Activated CD4-positive, alpha-beta T cell treated with anti-CD3 and anti-CD28 coated beads, Interleukin-2, amount 10 ng/mL, durations not matched to agents 7 days and 5 days (primary cell): ENCODE measurements at regions of chr10 and their contacts with region 1.

Region 1: GRCh38 chr10:101031128-101031795 is at the starts of genes PDZD7 and SFXN3:
- DNase-seq: peak; percentile 96
- H3K4me3 Mint-ChIP-seq: peak within 1 kb of the TSS; percentile 76
- H3K27ac Mint-ChIP-seq: peak within 1 kb of the TSS; percentile 88
- H3K4me1 Mint-ChIP-seq: peaks cover 17% of the 10 kb centered on the region
- H3K27me3 Mint-ChIP-seq: peaks cover 12% of the 10 kb centered on the region
- total RNA-seq, gene PDZD7: 0.65 to 0.74 TPM
- total RNA-seq, gene SFXN3: 39.5 to 43.5 TPM

Region 2: DNA sequence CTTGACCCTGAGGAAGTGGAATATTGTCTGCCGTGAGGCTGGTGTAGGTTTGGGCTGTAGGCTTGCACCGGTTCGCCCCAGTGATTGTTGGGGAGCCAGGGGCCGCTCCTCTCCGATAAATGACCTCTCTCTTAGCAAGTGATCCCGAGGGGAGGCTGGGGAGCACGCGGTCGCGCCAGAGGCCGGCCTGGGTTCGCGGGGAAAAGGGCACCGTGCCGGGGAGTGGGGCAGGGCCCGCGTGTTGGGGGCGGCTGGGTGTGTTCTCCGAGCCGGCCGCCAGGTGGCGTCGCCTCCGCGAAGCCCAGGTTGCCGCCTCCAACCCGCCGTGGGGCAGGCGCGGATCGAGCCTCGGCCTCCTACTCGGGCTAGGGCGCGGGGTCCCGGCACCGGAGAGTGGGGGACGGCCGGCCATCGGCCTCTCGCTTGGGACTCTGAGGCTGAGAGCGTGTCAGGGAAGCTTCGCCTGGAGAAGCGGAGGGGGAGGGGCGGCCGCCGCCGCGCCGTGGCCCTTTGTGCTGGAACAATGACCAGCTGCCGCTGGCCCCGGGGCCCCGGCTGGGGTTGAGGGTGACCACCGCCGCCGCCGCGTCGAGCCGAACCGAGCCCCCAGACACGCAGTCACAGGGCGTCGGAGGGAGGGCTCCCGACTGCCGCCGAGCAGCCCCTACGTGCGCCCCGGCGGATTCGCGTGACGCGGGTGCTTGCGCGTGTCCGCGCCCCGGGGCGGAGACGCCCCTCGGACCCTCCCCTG is 32.1 kb before region 1 on chr10:
- CTCF ChIA-PET with region 1: interaction called, 24 read pairs
- POLR2A ChIA-PET with region 1: no interaction called
- DNase-seq: peak; percentile 73
- H3K4me3 Mint-ChIP-seq: peak overlapping the region; percentile 80
- H3K27ac Mint-ChIP-seq: peak overlapping the region; percentile 88
- H3K4me1 Mint-ChIP-seq: peaks cover 27% of the 10 kb centered on the region
- H3K27me3 Mint-ChIP-seq: peaks cover 2% of the 10 kb centered on the region

Region 3: DNA sequence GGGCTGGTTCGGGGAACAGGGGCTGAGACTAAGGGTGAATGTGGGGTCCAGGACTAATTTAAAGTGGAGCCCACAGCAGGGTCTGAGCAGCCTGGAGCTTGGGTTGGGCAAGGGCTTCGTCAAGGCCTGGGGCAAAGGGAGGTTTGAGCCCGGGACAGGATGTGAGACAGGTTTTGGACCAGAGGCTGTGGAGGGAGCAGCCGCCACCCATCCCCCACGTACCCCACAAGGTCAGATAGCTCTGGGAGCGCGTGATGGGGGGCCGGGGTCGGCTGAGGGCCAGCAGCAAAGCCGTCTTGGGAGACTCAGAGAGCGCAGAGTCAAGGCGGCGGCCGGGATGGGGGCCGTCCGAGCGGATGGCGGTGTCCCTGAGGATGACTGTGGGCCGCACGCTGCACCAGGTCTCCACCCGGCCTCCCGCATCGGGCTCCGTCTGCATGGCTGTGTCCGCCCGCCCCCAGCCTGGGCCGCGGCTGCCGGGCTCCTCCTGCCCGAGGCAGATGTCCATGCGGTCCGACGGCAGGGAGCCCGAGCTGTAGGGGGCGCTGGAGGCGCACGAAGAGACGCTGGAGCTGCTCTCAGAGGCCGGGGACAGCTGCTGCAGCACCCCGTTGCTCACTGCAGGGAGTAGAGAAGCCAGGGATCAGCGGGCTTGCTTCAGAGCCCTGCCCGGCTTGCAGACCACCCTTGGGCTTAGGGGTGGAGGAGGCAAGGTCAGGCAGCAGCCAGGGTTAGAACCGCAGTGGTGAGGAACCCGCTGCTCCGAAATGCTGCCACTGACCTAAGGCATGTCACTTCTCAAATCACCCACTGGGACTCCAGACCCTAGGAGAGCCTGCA is 12.4 kb before region 1 on chr10:
- CTCF ChIA-PET with region 1: interaction called, 104 read pairs
- POLR2A ChIA-PET with region 1: no interaction called
- DNase-seq: peak; percentile 76
- H3K4me3 Mint-ChIP-seq: no peak overlapping the region
- H3K27ac Mint-ChIP-seq: no peak overlapping the region
- H3K4me1 Mint-ChIP-seq: peaks cover 11% of the 10 kb centered on the region
- H3K27me3 Mint-ChIP-seq: peaks cover 38% of the 10 kb centered on the region

Region 4: DNA sequence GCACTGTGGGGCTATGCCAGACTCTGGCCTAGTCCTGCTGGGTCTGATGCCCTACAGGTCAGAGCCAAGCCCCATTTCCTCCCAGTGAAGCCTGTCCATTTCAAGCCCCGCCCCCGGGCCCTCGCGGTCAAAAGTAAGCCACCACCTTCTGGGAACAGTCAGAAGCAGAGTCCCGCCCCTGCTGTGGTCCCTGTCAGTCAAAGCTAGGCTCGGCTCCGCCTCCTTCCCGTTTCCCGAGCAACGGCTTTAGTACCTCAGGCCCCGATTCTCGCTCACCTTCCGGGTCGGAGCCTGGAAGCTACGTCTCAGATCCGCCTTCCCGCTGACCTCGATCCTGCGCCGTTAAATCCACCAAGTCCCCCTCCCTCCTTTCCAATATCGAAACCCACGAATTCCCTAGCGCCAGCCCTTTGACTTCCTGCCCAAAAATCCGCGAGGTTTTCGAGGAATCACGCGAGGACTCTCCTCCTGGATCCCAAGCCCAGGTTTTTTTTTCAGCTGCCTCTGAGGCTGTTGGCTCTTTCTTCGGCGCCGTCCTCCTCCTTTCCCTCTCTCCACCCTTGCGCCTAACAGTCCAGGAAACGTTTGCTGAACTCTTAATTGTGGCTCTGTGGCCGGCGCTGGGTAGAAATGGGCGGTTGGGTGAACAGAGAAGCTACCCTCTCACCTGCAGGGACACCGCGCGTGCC is 11.5 kb after region 1 on chr10:
- CTCF ChIA-PET with region 1: interaction called, 38 read pairs
- POLR2A ChIA-PET with region 1: no interaction called
- DNase-seq: peak; percentile 89
- H3K4me3 Mint-ChIP-seq: peak overlapping the region; percentile 89
- H3K27ac Mint-ChIP-seq: peak overlapping the region; percentile 85
- H3K4me1 Mint-ChIP-seq: peaks cover 33% of the 10 kb centered on the region
- H3K27me3 Mint-ChIP-seq: peaks cover 38% of the 10 kb centered on the region

Region 5: GRCh38 chr10:101050208-101051069 is 19.2 kb after region 1 on chr10:
- CTCF ChIA-PET with region 1: interaction called, 15 read pairs
- POLR2A ChIA-PET with region 1: no interaction called
- DNase-seq: peak; percentile 79
- H3K4me3 Mint-ChIP-seq: no peak overlapping the region
- H3K27ac Mint-ChIP-seq: no peak overlapping the region
- H3K4me1 Mint-ChIP-seq: peaks cover 22% of the 10 kb centered on the region
- H3K27me3 Mint-ChIP-seq: peaks cover 48% of the 10 kb centered on the region

Region 6: DNA sequence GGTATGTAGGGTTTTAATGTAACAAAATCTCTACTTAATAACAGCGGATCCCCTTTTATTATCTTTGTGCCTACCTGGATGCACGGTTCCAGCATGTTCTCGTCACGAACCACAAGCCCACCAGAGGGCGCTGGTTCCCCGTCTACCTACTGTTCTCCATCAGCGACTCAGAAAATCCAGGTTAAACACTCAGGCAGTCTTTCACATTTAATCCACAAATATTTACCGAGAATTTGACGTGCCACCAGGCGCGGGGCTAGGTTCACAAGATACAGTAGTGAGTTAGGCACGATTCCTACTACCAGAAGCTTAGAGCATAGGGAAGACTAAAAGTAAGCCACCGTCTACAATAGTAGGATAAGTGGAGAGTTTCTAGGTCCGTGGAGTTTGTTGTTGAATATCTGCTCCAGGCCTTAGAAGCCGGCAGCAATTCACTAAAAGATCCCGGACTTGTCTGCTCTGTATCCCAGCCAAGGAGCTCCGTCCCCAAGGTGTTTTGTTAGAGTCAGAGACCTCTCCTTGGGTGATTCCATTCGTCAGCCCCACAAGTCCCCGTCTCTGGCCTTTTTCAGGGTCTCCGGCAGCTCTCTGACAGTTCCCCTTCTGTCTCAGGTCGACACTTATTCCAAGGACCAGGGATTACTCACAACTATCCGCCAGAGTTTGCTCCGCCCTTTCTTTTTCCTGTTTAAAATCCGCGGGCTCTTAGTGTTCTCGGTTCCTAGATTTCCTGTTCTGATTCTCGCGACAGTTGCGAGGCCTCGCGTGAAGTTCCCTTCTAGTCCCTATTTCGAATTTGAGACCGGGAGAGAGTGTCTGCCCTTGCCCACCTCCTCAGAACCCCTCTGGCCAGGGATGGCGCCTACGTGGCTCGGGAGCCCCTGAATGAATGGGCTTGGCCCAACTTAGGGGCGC is 29.0 kb after region 1 on chr10:
- CTCF ChIA-PET with region 1: interaction called, 14 read pairs
- POLR2A ChIA-PET with region 1: no interaction called
- DNase-seq: peak; percentile 93
- H3K4me3 Mint-ChIP-seq: peak overlapping the region; percentile 93
- H3K27ac Mint-ChIP-seq: peak overlapping the region; percentile 83
- H3K4me1 Mint-ChIP-seq: peaks cover 52% of the 10 kb centered on the region
- H3K27me3 Mint-ChIP-seq: peaks cover 24% of the 10 kb centered on the region

Region 7: DNA sequence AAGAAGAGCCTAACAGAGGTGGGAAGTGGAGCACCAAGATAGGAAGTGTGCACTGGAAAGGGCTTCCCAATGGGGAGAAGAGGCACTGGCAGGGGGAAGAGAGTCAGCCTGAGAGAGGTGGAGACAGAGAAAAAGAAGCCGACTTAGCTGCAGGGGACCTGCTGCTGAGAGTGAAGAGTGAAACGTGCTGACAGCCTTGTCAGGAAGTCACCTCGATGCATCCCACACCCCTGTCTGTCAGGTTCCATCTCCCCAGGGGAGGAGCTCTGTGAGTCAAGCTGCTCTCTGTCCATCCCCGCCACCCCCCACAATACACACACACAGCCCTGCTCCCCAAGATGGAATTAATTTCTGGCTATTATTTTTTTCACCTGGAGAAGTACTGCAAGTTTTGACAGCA is 44.5 kb after region 1 on chr10:
- CTCF ChIA-PET with region 1: no interaction called
- POLR2A ChIA-PET with region 1: no interaction called
- DNase-seq: no peak
- H3K4me3 Mint-ChIP-seq: no peak overlapping the region
- H3K27ac Mint-ChIP-seq: no peak overlapping the region
- H3K4me1 Mint-ChIP-seq: peaks cover 1% of the 10 kb centered on the region
- H3K27me3 Mint-ChIP-seq: peaks cover 53% of the 10 kb centered on the region